HEK293 (cell line): ENCODE measurements at regions of chr12 and their contacts with region 1.

Region 1: DNA sequence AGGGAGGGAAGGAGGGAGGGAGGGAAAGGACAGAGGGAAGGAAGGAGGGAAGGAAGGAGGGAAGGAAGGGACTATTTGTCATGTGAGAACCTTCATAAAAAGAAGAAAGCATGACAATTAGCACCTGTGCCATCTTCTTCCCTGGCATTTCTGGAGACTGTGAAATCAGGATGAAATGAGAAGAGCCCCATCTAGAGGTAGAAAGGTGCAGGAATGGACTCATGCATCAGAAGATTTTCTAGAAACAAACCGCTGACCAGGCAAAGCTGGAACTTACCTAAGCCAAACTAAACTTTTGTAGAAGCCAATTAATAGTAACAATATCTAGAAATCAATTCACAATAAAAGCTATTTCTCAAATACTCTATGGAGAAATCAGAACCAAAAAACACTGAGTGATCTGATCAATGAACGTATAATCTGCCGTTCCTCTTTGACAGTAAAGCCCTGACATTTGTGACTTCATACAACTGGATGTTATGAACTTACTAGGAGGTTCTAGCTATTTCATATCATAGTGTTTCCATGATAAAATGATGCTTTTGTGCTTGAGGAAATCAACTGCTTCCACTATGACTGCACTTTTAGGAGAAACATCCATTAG is 24.4 kb upstream of the CRACR2A start:
- H3K4me3 ChIP-seq: no peak overlapping the region
- H3K27ac ChIP-seq: no peak overlapping the region
- H3K4me1 ChIP-seq: no peaks in the 10 kb centered on the region
- CTCF ChIP-seq: peak; percentile 34; the same call in 1 of the 2 replicates

Region 2: DNA sequence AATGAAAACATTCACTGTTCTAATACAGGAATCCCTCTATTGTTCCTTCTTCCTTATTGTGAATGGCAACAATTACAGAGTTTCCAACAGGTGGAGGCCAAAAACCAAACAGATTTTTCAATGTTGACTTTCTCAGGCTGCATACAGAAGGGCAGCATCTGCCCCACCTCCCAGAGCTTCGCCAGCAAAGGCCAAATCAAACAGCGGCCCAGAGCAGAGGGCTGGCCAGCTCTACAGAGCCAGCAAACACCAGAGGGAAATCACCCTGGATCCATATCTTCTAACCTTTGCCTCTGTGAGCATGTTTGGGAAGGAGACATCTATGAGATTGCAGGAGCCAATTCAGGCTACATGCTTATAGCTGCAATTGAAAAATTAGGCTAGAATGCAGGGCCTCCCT is 20.0 kb before region 1 on chr12:
- CTCF ChIA-PET with region 1: interaction called, 10 read pairs
- POLR2A ChIA-PET with region 1: no interaction called
- H3K4me3 ChIP-seq: no peak overlapping the region
- H3K27ac ChIP-seq: no peak overlapping the region
- H3K4me1 ChIP-seq: no peaks in the 10 kb centered on the region
- CTCF ChIP-seq: no peak

Region 3: GRCh38 chr12:3803865-3804472 is 26.7 kb after region 1 on chr12:
- CTCF ChIA-PET with region 1: interaction called, 16 read pairs
- POLR2A ChIA-PET with region 1: no interaction called
- H3K4me3 ChIP-seq: no peak overlapping the region
- H3K27ac ChIP-seq: no peak overlapping the region
- H3K4me1 ChIP-seq: no peaks in the 10 kb centered on the region
- CTCF ChIP-seq: peak; percentile 49